BJ (cell line): ENCODE measurements at regions of chr2 and their contacts with region 1.

Region 1: DNA sequence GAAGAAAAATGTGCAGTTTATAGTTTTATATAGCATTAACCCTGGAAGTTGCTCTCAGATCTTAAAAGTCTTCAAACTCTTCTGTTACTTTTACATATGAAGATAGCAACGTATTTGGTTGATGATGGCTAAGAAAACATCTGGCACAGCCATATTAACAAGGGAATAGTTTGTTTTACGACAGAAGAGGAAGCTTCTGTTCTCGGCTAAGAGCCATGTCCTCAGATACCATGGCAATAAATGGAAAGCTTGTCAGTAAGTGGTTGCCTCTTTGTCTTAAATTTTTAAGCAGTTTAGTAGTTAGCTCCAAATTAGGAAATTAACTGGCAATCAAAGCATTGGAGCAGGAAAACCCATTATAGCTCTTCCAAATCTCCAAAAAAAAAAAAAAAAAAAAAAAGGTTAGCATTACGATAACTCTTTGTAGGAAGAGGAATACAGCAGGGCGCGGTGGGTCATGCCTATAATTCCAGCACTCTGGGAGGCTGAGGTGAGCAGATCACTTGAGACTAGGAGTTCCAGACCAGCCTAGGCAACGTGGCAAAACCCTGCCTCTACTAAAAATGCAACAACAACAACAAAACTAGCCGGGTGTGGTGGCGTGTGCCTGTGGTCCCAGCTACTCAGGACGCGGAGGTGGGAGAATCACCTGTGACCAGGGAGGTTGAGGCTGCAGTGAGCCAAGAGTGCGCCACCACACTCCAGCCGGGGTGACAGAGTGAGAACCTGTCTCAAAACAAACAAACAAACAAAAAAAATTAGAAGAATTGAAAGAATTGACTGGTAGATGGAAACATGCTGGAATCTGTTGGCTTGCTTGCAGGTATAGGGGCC is 4.5 kb upstream of the STON1 start:
- DNase-seq: peak; percentile 14
- H3K4me3 ChIP-seq: no peak overlapping the region
- H3K27me3 ChIP-seq: peaks cover 2% of the 10 kb centered on the region; the same call in 1 of the 2 replicates
- CTCF ChIP-seq: no peak

Region 2: DNA sequence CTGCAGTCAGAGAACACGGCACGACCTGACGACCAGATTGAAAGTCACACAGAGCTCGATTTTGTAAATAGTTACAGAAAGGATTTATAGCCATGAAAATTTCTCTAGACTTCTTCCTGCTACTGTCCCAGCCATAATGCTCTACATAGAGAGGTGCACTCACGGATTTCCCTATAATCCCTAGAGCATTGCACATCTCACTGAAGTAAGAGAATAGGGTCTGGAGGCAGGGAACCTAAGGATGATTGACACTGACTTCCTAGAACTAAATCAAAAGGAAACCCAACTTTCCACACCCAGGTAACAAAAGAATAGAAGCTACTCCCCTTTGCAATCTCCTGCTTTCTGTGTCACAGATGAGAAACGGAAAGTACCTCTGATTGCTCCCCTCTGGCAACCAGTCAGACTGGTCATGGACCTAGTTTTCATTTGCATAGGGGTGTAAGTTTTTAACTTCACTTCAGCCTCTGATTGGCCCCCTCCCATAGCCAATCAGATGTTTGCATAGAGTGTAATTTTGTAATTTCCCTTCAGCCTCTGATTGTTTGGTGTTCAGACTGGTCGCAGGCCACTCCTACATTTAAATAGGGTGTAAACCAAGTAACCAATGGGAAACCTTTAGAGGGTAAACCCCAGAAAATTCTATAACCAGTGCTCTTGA is 560.6 kb before region 1 on chr2:
- CTCF ChIA-PET with region 1: no interaction called
- POLR2A ChIA-PET with region 1: no interaction called
- DNase-seq: no peak
- H3K4me3 ChIP-seq: no peak overlapping the region
- H3K27me3 ChIP-seq: no peaks in the 10 kb centered on the region
- CTCF ChIP-seq: no peak

Region 3: GRCh38 chr2:48454504-48454903 is 71.0 kb before region 1 on chr2:
- CTCF ChIA-PET with region 1: no interaction called
- POLR2A ChIA-PET with region 1: interaction called, 10 read pairs
- DNase-seq: no peak
- H3K4me3 ChIP-seq: no peak overlapping the region
- H3K27me3 ChIP-seq: no peaks in the 10 kb centered on the region
- CTCF ChIP-seq: no peak

Region 4: DNA sequence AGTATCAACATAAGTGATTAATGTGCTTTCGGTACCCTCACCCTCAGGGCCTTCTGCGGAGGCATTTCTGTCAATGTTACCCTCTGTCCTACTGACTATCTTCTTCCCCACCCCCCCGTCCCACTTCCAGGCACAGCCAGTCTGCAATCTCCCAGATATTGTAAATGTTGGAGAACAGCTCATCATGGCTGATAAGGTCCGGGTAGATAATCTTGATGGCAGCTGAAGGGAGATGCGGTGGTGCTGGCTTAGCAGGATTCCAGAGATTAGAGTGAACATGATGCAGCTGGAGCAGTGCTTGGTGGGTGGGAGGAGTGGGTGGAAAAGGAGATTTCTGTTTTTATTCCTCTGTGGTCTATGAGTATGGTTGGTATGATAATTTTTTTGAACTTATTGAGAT is 107.7 kb after region 1 on chr2:
- CTCF ChIA-PET with region 1: no interaction called
- POLR2A ChIA-PET with region 1: no interaction called
- DNase-seq: no peak
- H3K4me3 ChIP-seq: no peak overlapping the region
- H3K27me3 ChIP-seq: no peaks in the 10 kb centered on the region
- CTCF ChIP-seq: no peak